Right ventricle myocardium superior (tissue), 1 donor: ENCODE measurements at regions of chr15 and their contacts with region 1.

Region 1: GRCh38 chr15:73560501-73561117 is 72.6 kb downstream of the NPTN start:
- DNase-seq: no peak
- ATAC-seq: peak; percentile 58

Region 2: GRCh38 chr15:73346735-73347312 is 213.8 kb before region 1 on chr15:
- intact Hi-C with region 1: no loop called
- DNase-seq: peak; percentile 67
- ATAC-seq: peak; percentile 82

Region 3: GRCh38 chr15:73495171-73495570 is 65.4 kb before region 1 on chr15:
- intact Hi-C with region 1: no loop called
- DNase-seq: no peak
- ATAC-seq: no peak

Region 4: GRCh38 chr15:73633111-73633990 is 72.7 kb after region 1 on chr15 and contains the start of gene NPTN:
- intact Hi-C with region 1: loop called (anchors 2 kb)
- DNase-seq: peak; percentile 99
- ATAC-seq: peak; percentile 95
- total RNA-seq, gene NPTN: 188 TPM

Region 5: GRCh38 chr15:73700041-73700842 is 139.6 kb after region 1 on chr15:
- intact Hi-C with region 1: loop called (anchors 5 kb)
- DNase-seq: peak; percentile 79
- ATAC-seq: peak; percentile 58